ENCODE measurements at regions of chr11 and their contacts with region 1.

Region 1: DNA sequence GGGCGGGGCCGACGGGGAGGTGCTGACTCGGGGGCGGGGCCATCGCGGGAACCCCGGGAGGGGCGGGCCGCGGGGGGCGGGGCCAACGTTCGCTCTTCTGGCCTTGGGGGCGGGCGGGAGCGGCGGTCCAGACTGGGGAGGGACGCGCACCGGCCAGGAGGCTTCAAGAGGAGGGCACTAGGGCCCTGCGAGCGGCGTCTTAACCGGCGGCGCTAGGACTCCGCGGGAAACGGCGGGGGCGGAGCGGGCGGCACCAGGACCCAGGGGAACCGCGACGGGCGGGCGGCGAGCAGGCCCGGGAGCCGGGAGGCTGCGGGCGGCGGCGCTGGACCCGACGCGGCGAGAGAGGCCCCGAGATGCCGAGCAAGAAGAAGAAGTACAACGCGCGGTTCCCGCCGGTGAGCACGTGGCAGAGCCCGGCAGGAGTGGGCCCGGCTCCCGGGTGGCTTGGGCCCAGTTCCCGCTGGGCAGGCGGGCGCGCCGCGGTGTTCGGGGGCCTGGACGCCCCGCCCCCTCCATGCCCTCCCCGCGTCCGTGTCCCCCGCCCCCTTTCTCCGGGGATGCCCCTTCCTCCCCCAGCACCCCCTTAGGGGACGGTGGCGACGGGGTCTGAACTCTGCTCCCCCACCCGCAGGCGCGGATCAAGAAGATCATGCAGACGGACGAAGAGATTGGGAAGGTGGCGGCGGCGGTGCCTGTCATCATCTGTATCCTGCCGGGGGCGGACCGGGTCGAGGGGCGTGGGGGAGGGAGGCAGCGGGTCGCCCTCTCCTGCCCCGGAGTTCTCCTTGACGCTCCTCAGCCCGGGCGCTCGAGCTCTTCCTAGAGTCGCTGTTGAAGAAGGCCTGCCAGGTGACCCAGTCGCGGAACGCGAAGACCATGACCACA is at the start of gene DRAP1:
- DNase-seq: peak; percentile 99
- ATAC-seq: peak; percentile 93 to 95
- total RNA-seq, gene DRAP1: 80.6 to 86.8 TPM

Region 2: DNA sequence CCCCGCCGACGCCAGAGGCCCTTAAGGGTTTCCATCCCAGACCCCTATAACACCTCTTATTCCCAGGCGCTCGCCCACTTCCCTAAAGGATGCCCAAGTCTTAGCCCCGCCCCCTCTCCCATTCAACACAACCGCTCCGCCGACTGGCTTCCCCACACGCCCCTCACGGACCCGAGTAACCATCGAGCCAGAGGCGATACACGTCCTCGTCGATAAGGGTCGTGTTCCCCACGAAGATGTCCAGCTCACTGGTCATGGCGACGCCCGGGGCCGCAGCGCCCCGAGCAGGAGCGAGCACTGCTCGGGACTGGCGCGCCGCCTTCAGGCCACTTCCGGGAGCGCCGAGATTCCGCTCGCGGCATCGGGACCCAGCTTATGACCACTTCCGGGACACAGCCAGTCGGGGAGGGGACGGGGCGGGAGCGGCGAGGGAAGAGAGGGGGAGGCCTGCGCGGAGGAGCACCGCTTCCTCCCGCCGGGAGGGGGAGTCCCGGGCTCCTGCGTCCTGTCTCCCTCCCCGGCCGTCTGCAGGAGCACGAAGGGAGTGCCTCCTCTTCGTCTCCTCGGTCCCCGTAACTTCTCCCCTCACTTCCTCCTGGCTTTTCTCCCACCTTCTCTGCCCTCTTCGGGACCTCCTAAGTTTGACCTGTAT is 31.1 kb before region 1 on chr11 and contains the start of gene FIBP:
- intact Hi-C with region 1: loop called in 1 of 2 experiments (anchors 2 kb)
- DNase-seq: peak; percentile 97
- ATAC-seq: peak; percentile 82 to 84
- total RNA-seq, gene FIBP: 37.8 to 44.3 TPM

Region 3: DNA sequence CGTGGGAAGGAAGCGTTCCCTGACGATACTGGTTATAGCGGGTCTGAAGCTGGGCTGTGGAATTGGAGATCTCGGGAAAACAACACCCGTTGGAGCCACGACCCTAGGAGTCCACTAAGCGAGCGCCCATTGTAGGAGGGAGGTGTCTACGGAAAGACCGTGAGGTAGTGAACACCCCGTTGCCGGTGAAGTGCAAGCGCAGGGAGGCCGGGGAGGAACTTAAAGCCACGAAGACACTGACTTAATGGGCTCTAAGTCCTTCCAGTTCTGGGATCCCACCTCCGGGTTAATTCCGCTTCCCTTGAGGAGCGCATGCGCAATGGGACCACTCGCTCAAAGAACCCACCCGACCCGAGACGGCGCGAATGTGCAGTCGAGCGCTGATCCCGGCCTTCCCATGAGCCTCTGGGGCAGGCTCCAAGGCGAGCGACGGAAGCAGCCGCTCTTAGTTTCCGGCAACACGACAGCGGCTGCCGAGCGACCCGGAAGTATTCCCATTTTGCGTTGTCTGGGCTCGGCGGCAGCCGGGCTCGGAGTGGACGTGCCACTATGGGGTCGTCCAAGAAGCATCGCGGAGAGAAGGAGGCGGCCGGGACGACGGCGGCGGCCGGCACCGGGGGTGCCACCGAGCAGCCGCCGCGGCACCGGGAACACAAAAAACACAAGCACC is 42.0 kb after region 1 on chr11 and contains the start of gene SART1:
- intact Hi-C with region 1: loop called in 1 of 2 experiments (anchors 5 kb)
- DNase-seq: peak; percentile 99
- ATAC-seq: peak; percentile 99
- total RNA-seq, gene SART1: 31.2 to 31.6 TPM